ENCODE measurements at regions of chr1 and their contacts with region 1.

Region 1: GRCh38 chr1:11735854-11736745 is at the start of gene AGTRAP:
- DNase-seq: peak; percentile 99
- total RNA-seq, gene AGTRAP: 17.4 TPM

Region 2: DNA sequence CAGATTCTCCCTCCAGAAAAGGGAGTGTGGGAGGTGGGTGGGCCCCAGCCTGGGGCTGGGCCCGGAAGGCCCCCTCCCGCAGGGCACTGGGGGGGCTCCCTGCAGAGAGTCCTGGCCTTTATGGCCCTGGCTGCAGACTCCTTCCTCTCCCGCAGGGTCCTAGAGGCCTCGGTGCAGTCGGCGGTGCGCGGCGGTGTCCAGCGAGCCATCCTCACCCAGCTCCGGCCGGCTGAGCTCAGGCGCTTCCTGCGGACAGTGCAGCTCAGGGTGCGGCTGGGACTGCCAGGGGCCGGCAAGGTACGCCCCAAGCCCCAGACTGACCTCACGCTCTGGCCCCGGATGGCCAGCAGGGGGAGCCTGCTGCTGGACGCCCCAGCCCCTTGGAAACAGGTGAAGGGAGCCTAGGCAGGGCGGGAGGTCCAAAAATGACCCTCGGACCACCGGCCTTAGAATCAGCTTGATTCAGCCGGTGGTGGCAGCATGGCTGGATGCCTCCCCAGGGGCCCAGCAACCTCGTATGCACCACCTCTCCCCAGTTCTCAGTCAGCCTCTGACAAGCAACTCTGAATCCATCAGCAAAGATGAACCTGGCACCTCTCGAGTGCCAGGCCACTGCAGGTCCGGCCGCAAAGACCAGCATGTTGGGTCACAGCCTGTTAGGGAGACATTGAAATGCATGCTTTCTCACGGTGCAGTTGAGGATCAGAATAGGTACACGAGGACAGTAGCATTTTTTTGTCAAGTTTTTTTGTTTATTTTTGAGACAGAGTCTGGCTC is 49.1 kb after region 1 on chr1:
- intact Hi-C with region 1: loop called (anchors 1 kb)
- DNase-seq: peak; percentile 90

Measured in cardiac septum (tissue), 1 donor.